ENCODE measurements at regions of chr4 and their contacts with region 1.

Region 1: GRCh38 chr4:138182838-138183426 is 59.2 kb downstream of the SLC7A11 start:
- DNase-seq: peak; percentile 85
- H3K4me3 ChIP-seq: no peak overlapping the region
- H3K27ac ChIP-seq: no peak overlapping the region
- H3K4me1 ChIP-seq: peaks cover 14% of the 10 kb centered on the region
- H3K27me3 ChIP-seq: no peaks in the 10 kb centered on the region
- CTCF ChIP-seq: peak; percentile 43 to 48
- POLR2A ChIP-seq: no peak

Region 2: GRCh38 chr4:137735561-137736104 is 447.3 kb before region 1 on chr4:
- CTCF ChIA-PET with region 1: interaction called, 6 read pairs
- POLR2A ChIA-PET with region 1: no interaction called
- dilution Hi-C with region 1: no loop called
- intact Hi-C with region 1: loop called (anchors 5 kb)
- DNase-seq: no peak
- H3K4me3 ChIP-seq: no peak overlapping the region
- H3K27ac ChIP-seq: no peak overlapping the region
- H3K4me1 ChIP-seq: no peaks in the 10 kb centered on the region
- H3K27me3 ChIP-seq: no peaks in the 10 kb centered on the region
- CTCF ChIP-seq: no peak
- POLR2A ChIP-seq: no peak

Region 3: DNA sequence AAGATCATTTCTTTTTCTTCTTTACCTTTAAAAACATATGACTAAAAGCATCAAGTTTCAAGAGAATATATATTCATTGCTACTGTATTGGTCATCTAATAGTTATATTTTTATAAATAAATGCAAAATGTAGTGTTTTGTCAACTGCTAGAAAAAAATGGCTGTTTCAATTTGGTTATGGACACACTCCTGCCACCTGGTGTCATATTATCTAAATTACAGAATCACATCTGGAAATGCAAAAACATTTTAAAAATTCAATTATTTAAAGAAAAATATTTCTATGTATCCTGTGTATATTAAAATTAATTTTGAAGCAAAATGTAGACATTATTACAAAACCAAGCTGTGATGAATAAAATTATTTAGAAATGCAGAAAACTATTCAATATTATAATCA is 321.2 kb before region 1 on chr4:
- CTCF ChIA-PET with region 1: no interaction called
- POLR2A ChIA-PET with region 1: no interaction called
- dilution Hi-C with region 1: no loop called
- intact Hi-C with region 1: loop called (anchors 5 kb)
- DNase-seq: peak; percentile 32
- H3K4me3 ChIP-seq: no peak overlapping the region
- H3K27ac ChIP-seq: no peak overlapping the region
- H3K4me1 ChIP-seq: no peaks in the 10 kb centered on the region
- H3K27me3 ChIP-seq: no peaks in the 10 kb centered on the region
- CTCF ChIP-seq: peak; percentile 11 to 18
- POLR2A ChIP-seq: no peak

Region 4: DNA sequence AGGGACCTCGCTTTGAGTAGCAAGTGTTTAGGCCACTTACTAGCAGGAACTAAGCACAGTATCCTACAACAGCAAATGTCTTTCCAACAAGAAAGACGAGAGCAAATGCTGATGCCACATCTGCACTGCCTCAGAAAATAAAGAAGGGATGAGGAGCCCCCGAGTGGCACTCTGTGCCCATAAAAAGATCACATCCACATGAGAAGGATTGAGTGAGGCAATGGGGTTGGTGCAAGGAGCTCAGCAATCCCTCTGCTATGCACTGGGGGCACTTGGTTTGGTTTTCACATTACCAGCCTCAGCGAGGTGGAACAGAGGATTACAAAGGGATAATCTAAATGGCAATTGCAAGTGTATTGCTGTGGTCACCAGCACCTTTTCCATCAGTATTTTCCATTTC is 312.0 kb after region 1 on chr4:
- CTCF ChIA-PET with region 1: interaction called, 10 read pairs
- POLR2A ChIA-PET with region 1: no interaction called
- dilution Hi-C with region 1: no loop called
- intact Hi-C with region 1: no loop called
- DNase-seq: peak; percentile 55
- H3K4me3 ChIP-seq: no peak overlapping the region
- H3K27ac ChIP-seq: no peak overlapping the region
- H3K4me1 ChIP-seq: no peaks in the 10 kb centered on the region
- H3K27me3 ChIP-seq: no peaks in the 10 kb centered on the region
- CTCF ChIP-seq: peak; percentile 38 to 39
- POLR2A ChIP-seq: no peak

Region 5: DNA sequence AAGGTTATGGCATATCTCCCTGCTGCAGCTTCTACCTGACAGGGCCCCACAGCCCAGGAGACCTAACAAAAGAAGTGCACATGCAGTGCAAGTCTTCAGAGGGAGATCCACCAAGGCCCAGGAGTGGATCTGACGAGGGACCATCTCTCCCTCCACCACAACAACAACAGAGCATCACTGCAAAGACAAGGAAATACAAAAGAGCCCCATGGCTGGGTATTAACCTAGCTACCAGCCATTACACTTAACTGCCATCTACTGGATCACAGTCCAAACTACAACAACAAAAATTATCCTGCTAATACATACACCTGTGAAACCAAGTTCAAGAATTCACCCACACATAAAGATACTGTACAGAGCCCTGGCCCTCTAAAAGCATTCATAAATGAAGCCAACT is 339.4 kb after region 1 on chr4:
- CTCF ChIA-PET with region 1: interaction called, 34 read pairs
- POLR2A ChIA-PET with region 1: no interaction called
- dilution Hi-C with region 1: no loop called
- intact Hi-C with region 1: loop called (anchors 2 kb)
- DNase-seq: peak; percentile 21
- H3K4me3 ChIP-seq: no peak overlapping the region
- H3K27ac ChIP-seq: no peak overlapping the region
- H3K4me1 ChIP-seq: no peaks in the 10 kb centered on the region
- H3K27me3 ChIP-seq: no peaks in the 10 kb centered on the region
- CTCF ChIP-seq: peak; percentile 27 to 40
- POLR2A ChIP-seq: no peak

Region 6: DNA sequence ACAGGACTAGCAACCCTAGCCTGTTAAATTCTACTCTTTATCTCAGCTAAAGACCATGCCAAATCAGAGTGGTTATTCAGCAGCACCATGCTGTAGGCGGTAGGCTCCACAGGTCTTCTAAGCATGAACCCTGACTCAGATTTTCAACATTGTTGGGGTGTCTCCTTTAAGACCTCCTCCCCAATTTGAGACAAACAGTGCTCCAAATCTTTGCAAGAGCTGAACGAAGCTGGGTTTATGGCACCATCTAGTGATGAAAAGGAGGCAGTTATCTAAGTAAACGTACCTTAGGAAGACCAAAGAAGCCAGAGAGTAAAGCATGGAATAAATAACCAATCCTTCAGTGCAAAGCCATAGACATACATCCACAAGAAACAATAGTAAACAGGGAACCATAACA is 393.8 kb after region 1 on chr4:
- CTCF ChIA-PET with region 1: interaction called, 4 read pairs
- POLR2A ChIA-PET with region 1: no interaction called
- dilution Hi-C with region 1: no loop called
- intact Hi-C with region 1: loop called (anchors 5 kb)
- DNase-seq: peak; percentile 57
- H3K4me3 ChIP-seq: no peak overlapping the region
- H3K27ac ChIP-seq: no peak overlapping the region
- H3K4me1 ChIP-seq: no peaks in the 10 kb centered on the region
- H3K27me3 ChIP-seq: peaks cover under 1 to 3% of the 10 kb centered on the region in 2 experiments
- CTCF ChIP-seq: peak; percentile 31 to 53
- POLR2A ChIP-seq: no peak

Region 7: DNA sequence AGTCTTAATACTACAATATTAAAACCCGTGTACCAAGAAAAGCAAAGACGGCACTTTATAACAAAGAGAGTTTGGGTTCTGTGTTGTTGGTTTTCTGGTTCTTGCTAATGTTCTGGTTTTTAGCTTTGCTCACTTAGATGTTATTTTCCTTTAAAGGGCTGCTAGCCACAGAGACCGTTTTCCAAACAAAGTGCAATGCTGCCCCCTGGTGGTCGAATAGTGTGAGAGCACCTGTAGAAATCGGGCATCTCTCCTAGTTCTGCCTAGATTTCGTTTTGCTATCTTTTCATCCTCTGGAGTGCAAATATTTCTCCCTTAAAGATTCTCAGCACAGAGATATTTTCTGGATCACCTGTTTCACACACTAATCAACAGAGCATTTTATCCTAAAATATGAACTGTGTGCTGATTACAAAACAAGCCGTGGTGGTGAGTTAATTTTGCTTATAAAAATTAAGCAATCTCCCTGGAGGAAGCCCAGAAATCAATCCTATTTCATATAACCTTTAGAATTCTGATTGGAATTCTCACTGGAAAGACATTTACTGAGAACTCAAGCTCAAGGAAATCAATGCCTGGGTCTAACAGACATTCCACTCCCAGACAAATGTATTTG is 498.2 kb after region 1 on chr4:
- CTCF ChIA-PET with region 1: interaction called, 5 read pairs
- POLR2A ChIA-PET with region 1: no interaction called
- dilution Hi-C with region 1: no loop called
- intact Hi-C with region 1: loop called (anchors 5 kb)
- DNase-seq: peak; percentile 58
- H3K4me3 ChIP-seq: no peak overlapping the region
- H3K27ac ChIP-seq: no peak overlapping the region
- H3K4me1 ChIP-seq: no peaks in the 10 kb centered on the region
- H3K27me3 ChIP-seq: peaks cover 24 to 48% of the 10 kb centered on the region in 2 experiments
- CTCF ChIP-seq: peak; percentile 72 to 76
- POLR2A ChIP-seq: no peak